Mammary epithelial cell (primary cell): ENCODE measurements at regions of chr3 and their contacts with region 1.

Region 1: DNA sequence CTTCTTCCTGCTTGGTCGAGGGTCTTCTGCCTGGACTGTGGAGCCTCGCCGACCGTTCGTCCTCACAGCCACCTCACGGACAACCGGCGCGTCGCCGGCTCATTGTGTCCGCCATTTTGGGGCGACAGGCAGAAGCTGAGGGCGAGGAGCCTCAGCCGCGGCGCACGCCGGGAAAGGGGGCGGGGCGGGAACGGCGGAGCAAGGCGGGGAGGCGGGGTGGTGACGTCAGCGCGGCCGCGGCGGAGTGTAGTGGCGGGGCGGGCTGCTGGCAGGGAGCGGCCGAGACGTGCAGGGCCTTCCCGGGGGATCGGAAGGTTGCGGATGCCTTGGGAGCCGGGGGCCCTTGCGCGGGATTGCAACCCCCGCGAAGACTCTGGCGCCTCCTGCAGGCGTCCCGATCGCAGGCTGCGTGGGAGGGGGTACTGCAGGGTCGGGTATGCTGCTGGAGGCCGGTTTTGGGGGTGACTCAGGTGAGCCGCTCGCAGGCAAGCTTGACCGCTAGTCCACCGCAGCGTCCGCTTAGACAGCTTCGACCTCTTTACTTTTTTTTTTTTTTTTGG is at the start of gene WDR82:
- DNase-seq: peak; percentile 91
- H3K4me3 ChIP-seq: peak within 1 kb of the TSS; percentile 96 to 100 (median 97)
- H3K27ac ChIP-seq: peak within 1 kb of the TSS; percentile 88
- H3K4me1 ChIP-seq: peaks cover 21% of the 10 kb centered on the region
- H3K27me3 ChIP-seq: no peaks in the 10 kb centered on the region
- CTCF ChIP-seq: peak; percentile 31 to 52
- total RNA-seq, gene WDR82: 54.3 to 59.8 TPM

Region 2: DNA sequence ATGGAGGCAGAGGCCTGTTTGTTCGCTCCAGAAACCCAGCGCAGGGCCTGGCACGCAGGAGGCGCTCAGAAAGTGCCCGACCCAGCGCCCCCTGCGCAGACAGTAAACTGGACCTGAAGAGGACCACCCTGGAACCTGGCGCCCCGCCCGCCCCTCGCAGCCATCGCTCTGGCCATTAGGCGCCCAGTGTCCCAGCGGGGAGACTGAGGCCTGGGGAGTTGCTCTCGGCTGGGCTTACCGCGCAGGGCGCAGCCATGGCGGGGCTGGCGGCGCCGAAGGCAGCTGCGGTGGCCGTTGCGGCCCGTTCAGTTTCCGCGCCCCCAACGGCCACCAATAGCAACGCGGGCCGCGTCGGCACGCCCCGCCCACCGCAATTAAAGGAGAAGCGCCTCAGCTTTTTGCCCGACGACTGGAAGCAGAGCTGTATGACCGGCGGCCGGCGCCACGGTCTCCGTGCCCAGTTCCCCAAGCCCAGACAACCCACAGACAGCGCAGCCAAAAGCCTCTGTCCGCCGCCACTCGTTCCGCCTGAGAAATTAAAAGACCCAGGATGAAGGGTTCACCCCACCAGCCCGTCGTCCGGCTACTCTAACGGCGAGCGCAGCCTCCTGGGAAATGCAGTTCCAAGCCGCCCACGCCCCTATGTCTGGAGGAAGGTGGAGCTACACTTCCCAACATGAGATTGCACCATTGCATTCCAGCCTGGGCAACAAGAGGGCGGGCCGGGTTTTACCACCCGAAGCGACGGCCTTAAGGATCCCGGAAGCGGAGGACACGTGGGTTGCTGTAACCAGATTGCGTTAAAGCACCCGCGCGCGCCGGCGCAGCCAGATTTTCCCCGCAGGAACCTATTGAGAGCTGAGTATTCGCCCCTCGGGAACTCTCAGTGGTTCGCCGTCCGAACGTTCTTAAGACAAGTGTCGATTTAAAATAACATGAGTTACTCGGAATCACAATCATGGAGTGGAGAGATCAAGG is 124.2 kb before region 1 on chr3 and contains the start of gene POC1A:
- CTCF ChIA-PET with region 1: no interaction called
- dilution Hi-C with region 1: no loop called
- in situ Hi-C with region 1: no loop called
- intact Hi-C with region 1: loop called (anchors 5 kb)
- DNase-seq: peak; percentile 97
- H3K4me3 ChIP-seq: peak within 1 kb of the TSS; percentile 58 to 77 (median 73)
- H3K27ac ChIP-seq: peak within 1 kb of the TSS; percentile 55
- H3K4me1 ChIP-seq: peaks cover 19% of the 10 kb centered on the region
- H3K27me3 ChIP-seq: no peaks in the 10 kb centered on the region
- CTCF ChIP-seq: no peak
- total RNA-seq, gene POC1A: 2.8 to 21.5 TPM

Region 3: GRCh38 chr3:52231502-52232293 is 46.9 kb before region 1 on chr3:
- CTCF ChIA-PET with region 1: no interaction called
- dilution Hi-C with region 1: no loop called
- in situ Hi-C with region 1: no loop called
- intact Hi-C with region 1: loop called (anchors 1 kb)
- DNase-seq: no peak
- H3K4me3 ChIP-seq: no peak overlapping the region
- H3K27ac ChIP-seq: no peak overlapping the region
- H3K4me1 ChIP-seq: peaks cover 5% of the 10 kb centered on the region
- H3K27me3 ChIP-seq: no peaks in the 10 kb centered on the region
- CTCF ChIP-seq: peak; percentile 88 to 98

Region 4: GRCh38 chr3:52238761-52239701 is 39.6 kb before region 1 on chr3 and contains the start of gene TWF2:
- CTCF ChIA-PET with region 1: no interaction called
- dilution Hi-C with region 1: no loop called
- in situ Hi-C with region 1: no loop called
- intact Hi-C with region 1: loop called (anchors 2 kb)
- DNase-seq: peak; percentile 71
- H3K4me3 ChIP-seq: peak within 1 kb of the TSS; percentile 51 to 99 (median 95)
- H3K27ac ChIP-seq: peak within 1 kb of the TSS; percentile 66
- H3K4me1 ChIP-seq: peaks cover 41% of the 10 kb centered on the region
- H3K27me3 ChIP-seq: no peaks in the 10 kb centered on the region
- CTCF ChIP-seq: peak; percentile 24 to 48
- total RNA-seq, gene TWF2: 67.8 to 96.2 TPM

Region 5: GRCh38 chr3:52291508-52292181 is 13.1 kb after region 1 on chr3:
- CTCF ChIA-PET with region 1: interaction called, 3 read pairs
- dilution Hi-C with region 1: no loop called
- in situ Hi-C with region 1: no loop called
- intact Hi-C with region 1: loop called (anchors 1 kb)
- DNase-seq: no peak
- H3K4me3 ChIP-seq: no peak overlapping the region
- H3K27ac ChIP-seq: no peak overlapping the region
- H3K4me1 ChIP-seq: peaks cover 4% of the 10 kb centered on the region
- H3K27me3 ChIP-seq: no peaks in the 10 kb centered on the region
- CTCF ChIP-seq: peak in 1 of 2 donors; percentile 54

Region 6: DNA sequence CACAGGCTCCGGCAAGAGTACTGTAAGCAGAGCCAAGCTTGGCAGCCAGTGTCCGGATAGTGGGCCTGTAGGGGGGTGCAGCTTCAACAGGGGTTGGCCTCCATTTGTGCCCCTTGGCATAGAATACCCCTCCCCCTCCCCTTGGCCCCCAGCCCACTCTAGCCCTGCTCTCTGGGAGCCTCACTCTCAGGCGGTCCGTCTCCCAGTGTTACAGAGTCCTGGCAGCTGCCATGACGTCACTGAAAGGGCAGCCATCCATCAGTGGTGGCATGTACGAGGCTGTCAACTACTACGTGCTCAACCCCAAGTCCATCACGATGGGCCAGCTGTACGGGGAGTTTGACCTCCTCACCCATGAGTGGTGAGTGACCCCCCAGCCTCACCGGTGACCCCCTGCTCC is 87.9 kb after region 1 on chr3:
- CTCF ChIA-PET with region 1: no interaction called
- dilution Hi-C with region 1: no loop called
- in situ Hi-C with region 1: no loop called
- intact Hi-C with region 1: no loop called
- DNase-seq: no peak
- H3K4me3 ChIP-seq: no peak overlapping the region
- H3K27ac ChIP-seq: no peak overlapping the region
- H3K4me1 ChIP-seq: no peaks in the 10 kb centered on the region
- H3K27me3 ChIP-seq: no peaks in the 10 kb centered on the region
- CTCF ChIP-seq: no peak

Region 7: GRCh38 chr3:52379610-52380009 is 101.0 kb after region 1 on chr3:
- CTCF ChIA-PET with region 1: no interaction called
- dilution Hi-C with region 1: no loop called
- in situ Hi-C with region 1: no loop called
- intact Hi-C with region 1: no loop called
- DNase-seq: no peak
- H3K4me3 ChIP-seq: no peak overlapping the region
- H3K27ac ChIP-seq: no peak overlapping the region
- H3K4me1 ChIP-seq: no peaks in the 10 kb centered on the region
- H3K27me3 ChIP-seq: no peaks in the 10 kb centered on the region
- CTCF ChIP-seq: no peak

Region 8: GRCh38 chr3:52455283-52456168 is 176.9 kb after region 1 on chr3 and contains the start of gene NISCH:
- CTCF ChIA-PET with region 1: no interaction called
- dilution Hi-C with region 1: no loop called
- in situ Hi-C with region 1: no loop called
- intact Hi-C with region 1: loop called (anchors 5 kb)
- DNase-seq: peak; percentile 67
- H3K4me3 ChIP-seq: peak within 1 kb of the TSS; percentile 60 to 80 (median 78)
- H3K27ac ChIP-seq: peak within 1 kb of the TSS; percentile 30
- H3K4me1 ChIP-seq: peaks cover 39% of the 10 kb centered on the region
- H3K27me3 ChIP-seq: no peaks in the 10 kb centered on the region
- CTCF ChIP-seq: no peak
- total RNA-seq, gene NISCH: 79.7 to 123 TPM